ENCODE measurements at regions of chr12 and their contacts with region 1.

Region 1: DNA sequence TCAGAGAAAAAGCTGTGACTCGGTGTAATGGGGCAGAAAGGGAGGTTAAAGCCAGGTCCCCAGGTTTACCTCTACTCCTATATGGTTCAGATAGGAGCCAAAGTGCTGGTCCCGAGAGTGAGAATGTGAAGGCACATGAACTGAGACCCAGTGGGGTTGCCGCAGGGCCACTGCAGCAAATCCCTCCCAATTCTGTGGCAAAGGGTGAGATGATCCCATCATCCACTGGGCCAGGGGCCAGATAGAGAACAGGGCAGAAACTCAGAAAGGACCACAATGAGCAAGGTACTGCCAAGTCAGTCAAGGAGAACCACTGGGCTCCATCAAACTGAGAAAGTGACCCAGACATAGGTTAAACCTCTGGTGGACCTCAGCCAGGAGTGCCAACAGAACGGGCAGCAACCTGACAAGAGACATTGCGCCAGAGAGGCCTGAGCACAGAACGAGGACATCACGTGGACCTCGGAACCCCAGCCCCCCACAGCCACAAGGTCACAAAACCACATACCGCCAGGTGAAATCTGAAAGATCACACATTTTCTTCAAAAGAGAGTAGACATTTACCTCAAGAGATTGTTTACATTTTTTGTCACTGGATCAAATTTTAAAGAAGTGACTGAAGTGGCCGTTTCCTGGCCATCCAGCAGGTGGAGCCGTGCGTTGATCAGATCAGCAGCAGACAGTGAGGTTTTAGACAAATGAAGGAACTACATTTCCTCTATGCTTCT is 20.5 kb upstream of the ITPR2 start:
- DNase-seq: peak; percentile 74 to 84 (median 77)
- ATAC-seq: peak; percentile 86
- H3K4me3 ChIP-seq: no peak overlapping the region
- H3K27ac ChIP-seq: peak overlapping the region in 1 of 4 donors; percentile 26
- H3K4me1 ChIP-seq: peaks cover 25% of the 10 kb centered on the region
- H3K27me3 ChIP-seq: no peaks in the 10 kb centered on the region
- CTCF ChIP-seq: peak; percentile 61 to 95 (median 91)
- POLR2A ChIP-seq: no peak

Region 2: GRCh38 chr12:26564391-26564790 is 289.1 kb before region 1 on chr12:
- intact Hi-C with region 1: no loop called
- DNase-seq: no peak
- ATAC-seq: no peak
- H3K4me3 ChIP-seq: no peak overlapping the region
- H3K27ac ChIP-seq: no peak overlapping the region
- H3K4me1 ChIP-seq: no peaks in the 10 kb centered on the region
- H3K27me3 ChIP-seq: no peaks in the 10 kb centered on the region
- CTCF ChIP-seq: no peak
- POLR2A ChIP-seq: no peak

Region 3: DNA sequence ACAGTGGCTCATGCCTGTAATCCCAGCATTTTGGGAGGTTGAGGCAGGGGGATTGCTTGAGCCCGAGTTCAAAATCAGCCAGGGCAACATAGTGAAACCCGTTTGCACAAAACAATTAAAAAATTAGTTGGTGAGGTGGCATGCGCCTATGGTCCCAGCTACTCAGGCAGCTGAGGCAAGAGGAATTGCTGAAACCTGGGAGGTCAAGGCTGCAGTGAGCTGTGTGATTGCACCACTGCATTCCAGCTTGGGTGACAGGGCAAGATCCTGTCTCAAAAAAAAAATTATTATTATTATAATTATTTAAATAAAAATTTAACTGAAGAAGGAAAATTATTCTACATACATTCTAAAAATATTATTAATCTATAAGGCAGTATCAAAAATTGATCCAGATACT is 184.6 kb before region 1 on chr12:
- intact Hi-C with region 1: no loop called
- DNase-seq: no peak
- ATAC-seq: no peak
- H3K4me3 ChIP-seq: no peak overlapping the region
- H3K27ac ChIP-seq: no peak overlapping the region
- H3K4me1 ChIP-seq: no peaks in the 10 kb centered on the region
- H3K27me3 ChIP-seq: no peaks in the 10 kb centered on the region
- CTCF ChIP-seq: no peak
- POLR2A ChIP-seq: no peak

Region 4: GRCh38 chr12:26884765-26885576 is 31.5 kb after region 1 on chr12:
- intact Hi-C with region 1: loop called (anchors 5 kb)
- DNase-seq: peak; percentile 91 to 94 (median 94)
- ATAC-seq: peak; percentile 99
- H3K4me3 ChIP-seq: no peak overlapping the region
- H3K27ac ChIP-seq: no peak overlapping the region
- H3K4me1 ChIP-seq: peaks cover 7% of the 10 kb centered on the region
- H3K27me3 ChIP-seq: no peaks in the 10 kb centered on the region
- CTCF ChIP-seq: peak; percentile 91 to 98 (median 98)
- POLR2A ChIP-seq: no peak